MCF 10A (cell line): ENCODE measurements at regions of chr14 and their contacts with region 1.

Region 1: DNA sequence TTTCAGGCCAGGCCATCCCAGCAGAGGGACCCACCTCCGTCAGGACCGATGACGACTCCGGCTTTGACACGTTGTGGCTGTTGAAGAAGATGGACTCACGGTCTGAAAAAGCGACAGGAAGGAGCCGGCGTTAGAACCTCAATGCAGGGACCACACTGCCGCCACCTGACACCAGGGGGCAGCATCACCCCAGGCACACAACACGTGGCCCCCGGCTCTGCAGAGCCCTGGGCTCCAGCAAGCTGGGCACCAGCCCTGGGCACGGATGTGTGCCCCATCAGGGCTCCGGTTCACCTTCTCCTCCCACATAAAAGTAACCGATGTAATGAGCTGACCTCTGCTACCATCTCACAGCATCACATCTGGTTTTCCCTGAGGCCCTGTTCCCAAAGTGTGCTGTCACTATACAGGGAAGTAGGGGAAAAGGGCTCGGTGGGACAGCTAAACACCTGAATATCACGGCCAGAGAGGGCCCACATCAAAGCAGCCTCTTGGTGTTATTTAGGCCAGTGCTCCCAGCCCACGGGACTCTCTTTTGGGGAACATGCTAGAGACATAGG is 29.0 kb downstream of the CHGA start:
- DNase-seq: peak; percentile 62
- H3K4me3 Mint-ChIP-seq: no peak overlapping the region
- H3K27ac Mint-ChIP-seq: no peak overlapping the region
- H3K4me1 Mint-ChIP-seq: peaks cover 8% of the 10 kb centered on the region
- H3K27me3 Mint-ChIP-seq: no peaks in the 10 kb centered on the region
- CTCF ChIP-seq: peak; percentile 90

Region 2: DNA sequence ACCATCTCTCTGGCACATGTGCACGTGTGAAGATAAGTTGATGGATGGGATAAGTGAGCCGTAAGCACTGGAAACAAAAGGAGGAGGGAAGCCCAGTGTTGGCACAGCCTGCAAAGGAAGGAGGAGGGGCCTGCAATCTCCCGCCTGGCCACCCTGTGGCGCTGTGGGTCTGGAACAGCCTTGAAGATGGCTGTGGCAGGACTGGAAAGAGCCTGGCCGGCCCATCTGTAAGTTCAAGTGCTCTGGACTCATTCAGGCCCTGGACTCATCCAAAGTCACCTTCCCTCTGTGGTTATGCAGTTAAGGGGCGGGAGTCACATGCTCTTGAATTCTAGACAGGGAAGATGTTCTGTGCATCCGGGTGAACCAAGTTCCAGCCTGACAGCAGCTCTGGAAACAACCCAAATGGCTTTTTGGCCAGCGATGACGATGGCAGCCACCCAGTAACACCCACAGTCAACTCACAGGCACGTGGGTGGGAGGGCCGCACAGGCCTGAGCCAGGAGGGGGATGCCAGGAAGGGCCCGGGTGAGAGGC is 21.3 kb after region 1 on chr14:
- CTCF ChIA-PET with region 1: interaction called, 10 read pairs
- POLR2A ChIA-PET with region 1: no interaction called
- intact Hi-C with region 1: no loop called
- DNase-seq: peak; percentile 81
- H3K4me3 Mint-ChIP-seq: no peak overlapping the region
- H3K27ac Mint-ChIP-seq: peak overlapping the region; percentile 92
- H3K4me1 Mint-ChIP-seq: peaks cover 19% of the 10 kb centered on the region
- H3K27me3 Mint-ChIP-seq: no peaks in the 10 kb centered on the region
- CTCF ChIP-seq: peak; percentile 84

Region 3: DNA sequence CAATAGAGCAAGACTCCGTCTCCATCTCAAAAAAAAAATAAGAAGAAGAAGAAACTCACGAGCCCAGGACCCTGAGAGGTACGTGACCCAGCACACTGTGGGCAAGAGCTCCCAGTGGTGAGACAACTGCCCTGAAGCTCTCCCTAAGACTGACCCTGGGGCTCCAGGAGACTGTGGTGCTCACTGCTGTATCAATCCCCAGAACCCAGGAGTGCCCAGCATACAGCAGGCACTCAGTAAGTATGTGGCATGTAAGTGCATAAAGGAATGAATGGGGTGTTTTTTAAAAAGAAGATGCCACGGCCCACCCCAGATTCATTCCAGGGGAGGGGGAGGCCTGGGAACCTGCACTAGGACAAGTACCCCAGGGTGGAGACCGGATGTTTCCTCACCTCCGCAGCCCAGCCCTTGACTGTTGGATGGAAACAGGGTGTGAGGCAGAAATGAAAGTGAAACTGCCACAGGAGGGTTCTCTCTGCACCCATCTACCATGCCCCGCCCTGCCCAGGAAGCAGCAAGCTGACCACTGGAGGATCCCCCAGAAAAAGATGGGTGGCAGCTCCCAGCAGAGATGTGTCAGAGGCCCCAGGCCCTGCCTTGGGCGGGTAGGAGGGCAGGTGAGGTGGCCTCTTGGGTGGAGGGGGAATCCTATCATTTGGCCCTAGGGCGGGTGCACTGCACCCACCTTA is 151.5 kb after region 1 on chr14:
- CTCF ChIA-PET with region 1: interaction called, 15 read pairs
- POLR2A ChIA-PET with region 1: no interaction called
- intact Hi-C with region 1: no loop called
- DNase-seq: peak; percentile 74
- H3K4me3 Mint-ChIP-seq: peak overlapping the region; percentile 61
- H3K27ac Mint-ChIP-seq: peak overlapping the region; percentile 87
- H3K4me1 Mint-ChIP-seq: peaks cover 26% of the 10 kb centered on the region
- H3K27me3 Mint-ChIP-seq: no peaks in the 10 kb centered on the region
- CTCF ChIP-seq: no peak

Region 4: GRCh38 chr14:93137864-93138263 is 185.9 kb after region 1 on chr14:
- CTCF ChIA-PET with region 1: interaction called, 19 read pairs
- POLR2A ChIA-PET with region 1: interaction called, 3 read pairs
- intact Hi-C with region 1: loop called (anchors 1 kb)
- DNase-seq: peak; percentile 58
- H3K4me3 Mint-ChIP-seq: no peak overlapping the region
- H3K27ac Mint-ChIP-seq: no peak overlapping the region
- H3K4me1 Mint-ChIP-seq: peaks cover 22% of the 10 kb centered on the region
- H3K27me3 Mint-ChIP-seq: no peaks in the 10 kb centered on the region
- CTCF ChIP-seq: no peak

Region 5: GRCh38 chr14:93173943-93174395 is 222.0 kb after region 1 on chr14:
- CTCF ChIA-PET with region 1: interaction called, 7 read pairs
- POLR2A ChIA-PET with region 1: no interaction called
- intact Hi-C with region 1: loop called (anchors 1 kb)
- DNase-seq: no peak
- H3K4me3 Mint-ChIP-seq: no peak overlapping the region
- H3K27ac Mint-ChIP-seq: no peak overlapping the region
- H3K4me1 Mint-ChIP-seq: no peaks in the 10 kb centered on the region
- H3K27me3 Mint-ChIP-seq: no peaks in the 10 kb centered on the region
- CTCF ChIP-seq: no peak